ENCODE measurements at regions of chr9 and their contacts with region 1.

Region 1: GRCh38 chr9:6467006-6467625 is 54.1 kb downstream of the UHRF2 start:
- DNase-seq: no peak
- ATAC-seq: no peak
- H3K4me3 Mint-ChIP-seq: no peak overlapping the region
- H3K27ac Mint-ChIP-seq: no peak overlapping the region
- H3K4me1 Mint-ChIP-seq: peaks cover 4% of the 10 kb centered on the region
- H3K27me3 Mint-ChIP-seq: no peaks in the 10 kb centered on the region
- CTCF ChIP-seq: no peak

Region 2: DNA sequence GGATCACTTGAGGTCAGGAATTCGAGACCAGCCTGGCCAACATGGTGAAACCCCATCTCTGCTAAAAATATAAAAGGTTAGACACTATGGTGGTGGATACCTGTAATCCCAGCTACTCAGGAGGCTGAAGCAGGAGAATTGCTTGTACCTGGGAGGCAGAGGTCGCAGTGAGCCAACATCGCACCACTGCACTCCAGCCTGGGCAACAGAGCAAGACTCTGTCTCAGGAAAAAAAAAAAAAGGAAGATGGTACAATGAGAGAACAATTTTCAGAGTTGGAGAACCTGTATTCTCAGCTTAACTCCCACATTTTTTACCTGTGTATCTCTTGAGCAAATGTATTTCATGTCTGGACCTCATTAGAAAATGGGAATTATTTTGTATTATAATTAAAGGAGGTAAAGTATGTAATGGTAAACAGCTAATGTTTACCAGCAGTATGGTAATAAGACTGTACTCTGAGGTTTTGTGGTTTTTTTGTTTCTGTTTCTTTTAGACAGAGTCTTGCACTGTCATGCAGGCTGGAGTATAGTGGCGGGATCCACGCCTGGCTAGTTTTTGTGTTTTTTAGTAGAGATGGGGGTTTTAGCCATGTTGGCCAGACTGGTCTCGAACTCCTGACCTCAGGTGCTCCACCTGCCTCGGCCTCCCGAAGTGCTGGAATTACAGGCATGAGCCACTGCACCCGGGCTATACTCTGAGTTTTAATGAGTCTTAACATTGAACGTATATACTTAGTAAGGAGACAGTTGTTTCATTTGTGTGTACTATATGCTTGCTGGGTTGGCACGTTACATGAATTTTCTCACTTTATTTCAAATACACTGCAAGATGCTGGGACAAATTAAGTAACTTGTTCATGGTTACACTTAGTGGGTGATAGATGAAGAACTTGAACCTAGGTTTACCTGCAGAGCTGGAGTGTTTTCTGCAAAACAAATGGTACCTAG is 37.9 kb before region 1 on chr9:
- CTCF ChIA-PET with region 1: no interaction called
- POLR2A ChIA-PET with region 1: no interaction called
- intact Hi-C with region 1: loop called (anchors 5 kb)
- DNase-seq: no peak
- ATAC-seq: peak; percentile 81
- H3K4me3 Mint-ChIP-seq: peak overlapping the region; percentile 64
- H3K27ac Mint-ChIP-seq: peak overlapping the region; percentile 73
- H3K4me1 Mint-ChIP-seq: peaks cover 80% of the 10 kb centered on the region
- H3K27me3 Mint-ChIP-seq: no peaks in the 10 kb centered on the region
- CTCF ChIP-seq: no peak

Measured in activated B cell treated with CpG ODN at 0.5 μM for 24 hours (primary cell).